ENCODE measurements at regions of chr14 and their contacts with region 1.

Region 1: GRCh38 chr14:22822571-22823098 is 7.1 kb upstream of the MRPL52 start:
- DNase-seq: peak; percentile 76 to 82
- ATAC-seq: peak; percentile 83 to 92 (median 88)
- H3K4me3 ChIP-seq: peak overlapping the region; percentile 16 to 60 (median 48)
- H3K27ac ChIP-seq: peak overlapping the region in 5 of 10 donors; percentile 2 to 82 (median 50)
- H3K4me1 ChIP-seq: peaks cover 3 to 61% (median 34%) of the 10 kb centered on the region in 9 donors
- H3K27me3 ChIP-seq: no peaks in the 10 kb centered on the region
- CTCF ChIP-seq: peak; percentile 72 to 99 (median 94)

Region 2: DNA sequence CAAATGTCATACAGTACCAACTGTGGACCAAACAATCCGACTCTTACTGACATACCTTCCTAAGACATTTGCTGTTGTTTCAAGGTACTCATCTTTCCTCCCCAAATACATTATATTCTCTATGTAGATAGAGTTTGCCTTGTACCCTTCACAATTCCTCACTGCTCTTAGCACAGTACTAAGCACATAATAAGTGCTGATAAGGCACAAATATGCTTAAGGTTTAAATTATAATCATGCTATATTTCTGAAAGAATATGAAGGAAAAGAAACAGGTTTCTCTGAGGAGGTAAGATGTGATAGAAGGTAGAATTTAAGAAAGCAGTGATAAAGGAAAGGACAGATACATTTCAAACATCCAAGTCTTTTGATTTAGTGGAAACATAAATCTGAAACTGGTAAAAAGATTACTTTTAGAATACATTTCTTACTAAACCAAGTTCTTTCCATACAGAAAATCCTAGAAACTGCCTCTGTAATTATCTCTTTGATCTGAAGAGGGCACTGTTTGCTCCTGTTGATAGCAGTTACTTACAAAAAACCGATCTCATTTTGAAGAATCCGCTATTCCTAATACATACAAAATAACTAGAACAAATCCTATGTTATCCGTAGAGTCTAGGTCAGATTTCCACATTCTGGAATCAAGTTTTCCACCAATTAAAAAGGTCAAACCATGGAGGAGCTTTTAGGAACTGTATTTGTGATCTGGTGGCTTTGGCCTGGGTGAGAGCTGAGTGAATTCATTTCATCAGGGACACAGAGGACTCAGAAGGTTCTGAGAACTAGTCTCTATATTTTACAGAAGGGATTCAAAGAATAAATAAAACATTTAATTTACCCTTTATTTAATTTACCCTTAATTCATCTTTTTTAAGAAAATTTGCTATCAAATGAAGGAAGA is 545.5 kb before region 1 on chr14:
- intact Hi-C with region 1: no loop called
- DNase-seq: no peak
- ATAC-seq: no peak
- H3K4me3 ChIP-seq: no peak overlapping the region
- H3K27ac ChIP-seq: no peak overlapping the region
- H3K4me1 ChIP-seq: peaks cover 0 to 10% (median 0%) of the 10 kb centered on the region in 9 donors
- H3K27me3 ChIP-seq: peaks cover 0 to 28% (median 12%) of the 10 kb centered on the region in 7 donors
- CTCF ChIP-seq: peak in 7 of 9 donors; percentile 39 to 64 (median 46)

Region 3: DNA sequence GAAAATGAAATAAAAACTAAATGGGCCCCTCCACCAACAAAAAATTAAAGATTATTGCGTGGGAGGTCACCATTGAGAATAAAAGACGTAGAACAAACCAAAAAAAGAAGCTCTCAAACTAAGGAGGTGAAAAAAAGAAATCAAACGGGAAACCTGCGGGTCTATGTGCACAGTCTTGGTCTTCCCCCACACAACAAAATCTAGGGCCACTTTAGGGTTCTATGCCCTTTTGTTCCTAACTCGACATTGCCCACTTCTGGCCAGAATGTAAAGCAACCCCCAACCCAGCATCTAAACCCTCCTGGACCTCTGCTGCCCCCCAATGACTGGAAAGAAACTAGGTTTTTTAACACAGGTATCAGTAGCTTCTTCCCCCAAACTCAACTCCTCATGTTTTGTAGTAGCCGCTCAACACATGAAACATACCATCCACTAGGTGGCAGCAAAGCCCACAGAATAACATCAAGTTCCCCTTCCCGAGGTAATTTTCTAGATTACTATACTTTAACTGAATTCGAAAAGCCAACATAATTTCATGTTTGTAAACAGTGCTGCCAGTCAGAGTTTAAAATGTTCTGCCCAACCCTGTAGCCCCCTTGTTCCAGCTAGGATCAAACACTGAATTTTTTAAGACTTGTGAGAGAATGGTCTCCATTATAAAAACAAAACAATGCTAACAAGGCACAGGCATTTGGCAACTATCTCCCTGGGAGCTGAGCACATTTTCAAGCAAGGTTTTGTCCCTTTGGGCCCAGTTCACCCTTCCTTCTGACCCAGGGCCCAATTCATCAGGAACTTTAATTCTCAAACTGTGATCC is 252.3 kb before region 1 on chr14:
- intact Hi-C with region 1: loop called in 4 of 10 experiments (anchors 5 to 10 kb)
- DNase-seq: peak in 1 of 2 donors; percentile 85
- ATAC-seq: peak; percentile 57 to 86 (median 78)
- H3K4me3 ChIP-seq: peak overlapping the region in 1 of 10 donors; percentile 12
- H3K27ac ChIP-seq: peak overlapping the region in 4 of 10 donors; percentile 30 to 91 (median 50)
- H3K4me1 ChIP-seq: peaks cover 0 to 66% (median 12%) of the 10 kb centered on the region in 9 donors
- H3K27me3 ChIP-seq: no peaks in the 10 kb centered on the region
- CTCF ChIP-seq: peak; percentile 80 to 88 (median 83)

Region 4: DNA sequence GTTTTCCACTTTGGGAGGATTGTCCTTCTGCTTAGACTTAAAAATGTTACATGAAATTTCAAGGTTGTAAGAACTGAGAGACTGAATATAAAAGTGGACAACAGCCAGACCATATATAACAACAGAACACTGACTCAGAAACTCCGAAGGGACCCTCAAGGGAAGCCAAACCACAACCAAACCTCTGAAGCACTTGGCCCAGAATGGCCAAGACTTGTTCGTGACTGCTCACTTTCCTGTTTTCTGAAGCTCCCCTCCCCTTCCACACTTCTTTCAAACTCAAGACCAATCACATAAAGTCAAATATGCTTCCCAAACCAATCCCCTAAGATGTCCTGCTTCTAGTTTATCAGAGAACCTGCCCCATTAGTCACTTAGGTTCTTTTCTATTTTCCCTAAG is 192.1 kb before region 1 on chr14:
- intact Hi-C with region 1: no loop called
- DNase-seq: no peak
- ATAC-seq: no peak
- H3K4me3 ChIP-seq: no peak overlapping the region
- H3K27ac ChIP-seq: no peak overlapping the region
- H3K4me1 ChIP-seq: no peaks in the 10 kb centered on the region
- H3K27me3 ChIP-seq: peaks cover 0 to 5% (median 0%) of the 10 kb centered on the region in 7 donors
- CTCF ChIP-seq: no peak

Region 5: GRCh38 chr14:22653012-22653621 is 169.5 kb before region 1 on chr14:
- intact Hi-C with region 1: loop called in 3 of 10 experiments (anchors 5 to 10 kb)
- DNase-seq: peak; percentile 18 to 55
- ATAC-seq: peak in 7 of 8 donors; percentile 66 to 88 (median 77)
- H3K4me3 ChIP-seq: no peak overlapping the region
- H3K27ac ChIP-seq: no peak overlapping the region
- H3K4me1 ChIP-seq: peaks cover 0 to 9% (median 0%) of the 10 kb centered on the region in 9 donors
- H3K27me3 ChIP-seq: peaks cover 0 to 6% (median 0%) of the 10 kb centered on the region in 7 donors
- CTCF ChIP-seq: peak; percentile 55 to 88 (median 79)

Region 6: GRCh38 chr14:22668417-22668816 is 154.2 kb before region 1 on chr14:
- intact Hi-C with region 1: loop called in 1 of 10 experiments (anchors 10 kb)
- DNase-seq: no peak
- ATAC-seq: no peak
- H3K4me3 ChIP-seq: no peak overlapping the region
- H3K27ac ChIP-seq: peak overlapping the region in 2 of 10 donors; percentile 46 to 50
- H3K4me1 ChIP-seq: peaks cover 0 to 8% (median 0%) of the 10 kb centered on the region in 9 donors
- H3K27me3 ChIP-seq: no peaks in the 10 kb centered on the region
- CTCF ChIP-seq: no peak

Region 7: DNA sequence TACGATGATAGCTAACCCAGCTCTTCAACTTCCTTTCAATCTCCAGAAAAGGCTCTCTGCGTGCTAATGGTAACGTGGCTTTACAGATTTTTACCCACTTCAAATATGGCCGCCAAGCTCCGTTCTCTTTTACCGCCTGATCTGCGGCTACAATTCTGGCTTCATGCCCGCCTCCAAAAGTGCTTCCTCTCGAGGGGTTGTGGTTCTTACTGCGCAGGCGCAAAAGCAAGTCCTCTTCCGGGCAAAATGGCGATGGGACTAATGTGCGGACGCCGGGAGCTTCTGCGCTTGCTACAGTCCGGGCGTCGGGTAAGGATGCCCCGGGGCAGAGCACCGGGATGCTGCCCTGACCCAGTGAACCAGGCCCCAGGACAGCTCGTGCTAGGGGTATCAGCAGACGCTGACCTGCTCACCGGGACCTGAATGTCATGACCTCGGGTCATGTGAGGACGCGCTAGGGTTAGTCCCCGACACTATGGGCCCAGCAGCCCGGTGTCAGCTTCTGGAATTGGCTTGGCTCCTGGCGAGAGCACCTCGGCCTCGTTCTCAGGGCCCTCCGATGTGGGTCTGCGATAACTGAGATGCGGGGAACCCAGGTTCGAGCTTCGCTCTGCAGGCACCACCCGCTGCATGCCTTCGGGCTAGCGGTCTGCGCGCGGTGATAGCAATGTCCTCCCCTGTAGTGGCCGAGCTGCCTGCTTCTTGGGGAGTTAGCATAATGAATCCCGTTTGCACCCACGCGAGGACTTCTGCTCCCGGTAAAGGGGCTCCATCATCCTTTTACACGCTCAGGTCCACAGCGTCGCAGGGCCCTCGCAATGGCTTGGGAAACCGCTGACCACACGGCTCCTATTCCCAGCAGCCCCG is 55.9 kb before region 1 on chr14 and contains the start of gene OXA1L:
- intact Hi-C with region 1: loop called in 1 of 10 experiments (anchors 5 kb)
- DNase-seq: peak; percentile 94 to 99
- ATAC-seq: peak; percentile 92 to 97 (median 96)
- H3K4me3 ChIP-seq: peak within 1 kb of the TSS; percentile 65 to 97 (median 86)
- H3K27ac ChIP-seq: peak within 1 kb of the TSS; percentile 85 to 95 (median 90)
- H3K4me1 ChIP-seq: peaks cover 0 to 42% (median 24%) of the 10 kb centered on the region in 9 donors
- H3K27me3 ChIP-seq: no peaks in the 10 kb centered on the region
- CTCF ChIP-seq: no peak
- total RNA-seq, gene OXA1L: 138 to 219 (median 189) TPM

Region 8: GRCh38 chr14:23160924-23161538 is 338.4 kb after region 1 on chr14:
- intact Hi-C with region 1: no loop called
- DNase-seq: peak in 1 of 2 donors; percentile 26
- ATAC-seq: peak; percentile 57 to 80 (median 68)
- H3K4me3 ChIP-seq: no peak overlapping the region
- H3K27ac ChIP-seq: peak overlapping the region in 1 of 10 donors; percentile 86
- H3K4me1 ChIP-seq: peaks cover 0 to 48% (median 10%) of the 10 kb centered on the region in 9 donors
- H3K27me3 ChIP-seq: no peaks in the 10 kb centered on the region
- CTCF ChIP-seq: no peak

Measured in heart right ventricle (tissue), 16 donors.